Gastrocnemius medialis (tissue), 4 donors: ENCODE measurements at regions of chr5 and their contacts with region 1.

Region 1: DNA sequence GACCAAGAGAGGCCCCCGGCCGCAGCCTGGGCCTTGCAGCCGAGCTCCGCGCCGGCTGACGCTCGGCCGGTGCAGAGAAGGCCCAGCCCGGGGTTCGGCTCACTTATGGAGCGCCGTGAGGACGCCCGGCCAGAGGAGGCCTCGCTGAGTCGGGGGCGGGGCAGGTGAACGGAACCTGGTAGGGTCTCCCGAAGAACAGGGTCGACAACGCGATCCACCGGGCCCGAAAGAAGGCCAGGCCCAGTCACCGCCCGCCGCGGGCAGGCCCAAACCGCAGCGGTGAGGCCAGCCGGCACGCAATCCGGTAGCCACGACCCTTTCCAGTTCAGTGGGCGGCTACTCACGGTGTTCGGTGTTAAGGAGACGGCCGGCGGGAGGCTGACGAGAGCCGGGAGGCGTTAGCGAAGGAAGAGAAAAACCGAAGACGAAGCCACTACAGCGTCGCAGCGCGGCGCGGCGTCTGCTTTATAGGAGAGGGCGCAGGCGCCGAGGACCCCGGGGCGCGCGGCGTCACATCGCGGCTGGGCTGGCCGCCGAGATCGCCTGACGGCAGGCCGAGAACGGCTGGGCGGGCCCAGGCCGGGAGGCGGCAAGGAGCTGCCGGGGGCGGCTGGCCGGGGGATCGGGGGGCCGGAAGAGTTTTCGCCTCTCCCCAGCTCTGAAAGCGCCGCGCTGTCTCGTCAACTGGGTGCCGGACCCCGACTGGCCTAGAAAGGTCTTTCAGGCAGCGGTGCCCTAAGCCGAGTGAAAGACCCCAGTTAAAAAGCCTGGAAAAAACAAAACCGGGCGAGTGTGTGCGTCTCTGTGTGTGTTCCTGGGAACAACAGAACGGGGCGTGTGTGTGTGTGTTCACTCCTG is at the start of gene SKP1:
- DNase-seq: peak; percentile 68 to 77
- ATAC-seq: peak; percentile 72 to 76
- H3K4me3 ChIP-seq: peak within 1 kb of the TSS; percentile 96 to 99 (median 98)
- H3K27ac ChIP-seq: peak within 1 kb of the TSS; percentile 93 to 99 (median 96)
- H3K4me1 ChIP-seq: peaks cover 45 to 46% of the 10 kb centered on the region in 2 donors
- H3K27me3 ChIP-seq: no peaks in the 10 kb centered on the region
- CTCF ChIP-seq: no peak
- POLR2A ChIP-seq: peak; percentile 96 to 97
- total RNA-seq, gene SKP1: 318 to 499 (median 476) TPM

Region 2: GRCh38 chr5:134577796-134578363 is 401.1 kb after region 1 on chr5:
- in situ Hi-C with region 1: loop called in 3 of 4 experiments (anchors 25 kb)
- intact Hi-C with region 1: loop called (anchors 5 kb)
- DNase-seq: peak; percentile 31 to 69
- ATAC-seq: peak; percentile 53 to 57
- H3K4me3 ChIP-seq: no peak overlapping the region
- H3K27ac ChIP-seq: peak overlapping the region in 1 of 4 donors; percentile 7
- H3K4me1 ChIP-seq: peaks cover 27 to 38% of the 10 kb centered on the region in 2 donors
- H3K27me3 ChIP-seq: no peaks in the 10 kb centered on the region
- CTCF ChIP-seq: peak; percentile 80 to 87 (median 86)
- POLR2A ChIP-seq: no peak

Region 3: GRCh38 chr5:134586866-134587524 is 410.3 kb after region 1 on chr5:
- in situ Hi-C with region 1: loop called in 3 of 4 experiments (anchors 25 kb)
- intact Hi-C with region 1: loop called (anchors 5 kb)
- DNase-seq: peak; percentile 43 to 77
- ATAC-seq: peak; percentile 42 to 63
- H3K4me3 ChIP-seq: no peak overlapping the region
- H3K27ac ChIP-seq: peak overlapping the region in 3 of 4 donors; percentile 5 to 65 (median 13)
- H3K4me1 ChIP-seq: peaks cover 30 to 43% of the 10 kb centered on the region in 2 donors
- H3K27me3 ChIP-seq: no peaks in the 10 kb centered on the region
- CTCF ChIP-seq: peak; percentile 63 to 84 (median 81)
- POLR2A ChIP-seq: no peak

Region 4: DNA sequence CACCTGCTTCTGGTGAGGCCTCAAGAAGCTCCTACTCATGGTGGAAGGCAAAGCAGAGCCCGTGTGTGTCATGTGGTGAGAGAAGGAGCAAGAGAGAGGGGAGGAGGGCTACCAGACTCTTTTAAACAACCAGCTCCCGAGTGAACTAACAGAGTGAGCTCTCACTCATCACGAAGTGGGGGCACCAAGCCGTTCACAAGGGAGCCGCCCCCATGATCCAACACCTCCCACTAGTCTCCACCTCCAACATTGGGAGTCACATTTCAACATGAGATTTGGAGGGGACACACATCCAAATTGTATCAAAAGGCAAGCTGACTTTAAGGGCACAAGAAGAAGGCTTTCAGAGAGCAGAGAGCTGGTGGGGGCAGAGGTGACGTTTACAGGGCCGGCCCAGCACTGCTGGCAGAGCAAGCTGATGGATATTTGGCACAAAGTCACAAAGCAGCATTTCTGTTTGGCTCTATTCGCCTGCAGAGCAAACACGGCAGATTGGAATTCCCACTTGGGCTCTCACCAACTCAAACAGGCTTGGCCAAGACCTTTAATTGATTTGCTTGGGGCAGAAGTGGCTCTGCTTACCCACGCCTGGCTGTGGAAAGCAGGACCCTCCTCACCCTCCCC is 837.3 kb after region 1 on chr5:
- in situ Hi-C with region 1: no loop called
- intact Hi-C with region 1: no loop called
- DNase-seq: no peak
- ATAC-seq: no peak
- H3K4me3 ChIP-seq: no peak overlapping the region
- H3K27ac ChIP-seq: no peak overlapping the region
- H3K4me1 ChIP-seq: no peaks in the 10 kb centered on the region
- H3K27me3 ChIP-seq: no peaks in the 10 kb centered on the region
- CTCF ChIP-seq: no peak
- POLR2A ChIP-seq: no peak